ENCODE measurements at regions of chr1 and their contacts with region 1.

Region 1: DNA sequence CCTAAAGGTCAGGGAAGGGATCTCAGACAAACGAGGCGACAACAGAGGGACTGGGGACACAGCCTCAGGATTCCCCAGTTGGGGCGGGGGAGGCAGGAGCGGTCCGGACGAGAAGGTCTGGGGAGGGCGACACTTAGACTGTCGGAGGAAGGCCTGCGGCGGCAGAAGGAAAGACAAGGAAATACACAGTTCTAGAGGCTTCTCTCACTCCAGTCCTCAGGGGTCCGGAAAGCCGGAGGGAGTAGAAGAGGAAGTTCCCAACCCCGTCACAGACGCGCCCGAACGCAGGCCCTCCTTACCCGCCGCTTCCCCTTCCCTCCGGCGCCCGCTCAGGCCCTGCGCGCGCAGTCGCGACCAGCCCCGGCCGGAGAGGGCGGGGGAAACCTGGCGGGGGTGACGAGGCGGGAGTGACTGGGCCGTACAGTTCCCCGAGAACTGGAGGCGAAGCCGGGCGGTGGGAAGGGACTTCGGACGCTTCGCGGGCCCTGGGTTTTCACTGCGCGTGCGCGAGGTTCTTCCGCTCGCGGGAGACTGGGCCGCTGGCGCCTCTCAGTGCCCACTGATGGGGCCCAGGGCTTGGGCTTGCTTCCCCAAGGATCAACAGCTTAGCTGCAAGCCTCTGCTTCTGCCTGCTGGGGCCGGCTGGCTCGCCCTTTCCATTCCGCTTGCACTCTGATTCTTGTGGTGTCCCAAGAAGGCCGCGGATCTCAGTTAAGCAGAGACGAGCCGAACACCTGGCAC is at the start of gene IPP:
- DNase-seq: peak; percentile 98
- H3K4me3 ChIP-seq: peak within 1 kb of the TSS; percentile 68 to 70 (median 68)
- H3K27ac ChIP-seq: peak within 1 kb of the TSS; percentile 89 to 97 (median 96)
- H3K4me1 ChIP-seq: peaks cover 7 to 34% (median 29%) of the 10 kb centered on the region in 4 donors
- H3K27me3 ChIP-seq: no peaks in the 10 kb centered on the region
- CTCF ChIP-seq: peak; percentile 22 to 44 (median 33)
- EP300 ChIP-seq: no peak
- POLR2A ChIP-seq: peak; percentile 93
- total RNA-seq, gene IPP: 6.0 to 14.1 (median 10.7) TPM

Region 2: GRCh38 chr1:45803301-45803780 is 52.9 kb after region 1 on chr1 and contains the start of gene MAST2:
- intact Hi-C with region 1: loop called (anchors 2 kb)
- DNase-seq: peak; percentile 93
- H3K4me3 ChIP-seq: peak within 1 kb of the TSS; percentile 56 to 77 (median 64)
- H3K27ac ChIP-seq: peak within 1 kb of the TSS; percentile 85 to 88 (median 86)
- H3K4me1 ChIP-seq: peaks cover 10 to 31% (median 29%) of the 10 kb centered on the region in 4 donors
- H3K27me3 ChIP-seq: no peaks in the 10 kb centered on the region
- CTCF ChIP-seq: peak in 1 of 3 experiments; percentile 31
- EP300 ChIP-seq: no peak
- POLR2A ChIP-seq: peak; percentile 39
- total RNA-seq, gene MAST2: 44.9 to 78.3 (median 68.5) TPM

Region 3: DNA sequence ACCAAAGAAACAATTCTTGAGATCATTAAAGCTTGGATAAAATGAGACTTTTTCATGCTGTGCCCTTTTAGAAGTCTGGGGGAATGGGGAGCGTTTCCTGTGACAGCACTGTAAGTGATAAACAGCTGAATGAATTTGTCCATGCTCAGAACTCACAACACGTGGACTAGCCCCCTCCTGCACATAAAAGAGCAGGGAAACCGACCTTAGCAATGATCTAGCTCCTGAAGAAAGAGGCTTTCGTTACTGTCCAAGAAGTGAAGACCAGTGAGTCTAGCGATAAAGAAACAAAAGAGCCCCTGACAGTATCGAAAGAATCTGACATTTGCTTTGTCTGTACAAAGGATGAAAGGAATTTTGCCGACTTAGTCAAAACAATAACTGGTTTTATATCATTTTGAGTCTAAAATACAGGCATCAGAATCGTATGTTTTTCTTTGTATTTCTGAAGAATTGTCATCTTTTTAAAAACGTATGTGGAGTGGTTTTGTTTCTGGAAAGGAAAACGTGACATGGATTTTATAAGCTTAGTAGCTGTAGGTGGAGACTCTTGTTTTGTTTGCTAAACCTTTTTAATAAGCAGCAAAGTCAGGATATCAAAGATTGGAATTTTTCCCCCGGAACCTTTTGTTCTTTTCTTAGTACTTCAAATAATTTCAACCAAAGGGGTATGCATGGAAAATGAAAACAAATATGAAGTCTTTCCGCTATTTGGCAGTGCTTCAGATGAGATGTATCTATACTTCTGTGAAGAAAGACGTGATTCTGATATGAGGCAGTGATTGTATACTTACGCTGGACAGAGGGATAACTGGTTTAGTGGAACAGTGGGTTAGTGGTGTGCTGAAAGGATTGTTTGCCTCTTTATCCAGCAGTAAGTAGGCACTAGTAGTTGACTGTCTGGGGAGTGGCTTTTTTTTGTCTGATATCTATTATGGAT is 114.0 kb after region 1 on chr1:
- intact Hi-C with region 1: loop called (anchors 10 kb)
- DNase-seq: no peak
- H3K4me3 ChIP-seq: peak overlapping the region; percentile 40 to 50 (median 48)
- H3K27ac ChIP-seq: peak overlapping the region in 2 of 4 donors; percentile 23 to 41
- H3K4me1 ChIP-seq: peaks cover 12 to 29% (median 24%) of the 10 kb centered on the region in 4 donors
- H3K27me3 ChIP-seq: no peaks in the 10 kb centered on the region
- CTCF ChIP-seq: no peak
- EP300 ChIP-seq: no peak
- POLR2A ChIP-seq: no peak